ENCODE measurements at regions of chr1 and their contacts with region 1.

Region 1: GRCh38 chr1:48236716-48237470 is 14.4 kb downstream of the SLC5A9 start:
- DNase-seq: peak; percentile 42
- H3K4me3 ChIP-seq: no peak overlapping the region
- H3K27ac ChIP-seq: no peak overlapping the region
- H3K4me1 ChIP-seq: no peaks in the 10 kb centered on the region
- CTCF ChIP-seq: peak; percentile 78

Region 2: DNA sequence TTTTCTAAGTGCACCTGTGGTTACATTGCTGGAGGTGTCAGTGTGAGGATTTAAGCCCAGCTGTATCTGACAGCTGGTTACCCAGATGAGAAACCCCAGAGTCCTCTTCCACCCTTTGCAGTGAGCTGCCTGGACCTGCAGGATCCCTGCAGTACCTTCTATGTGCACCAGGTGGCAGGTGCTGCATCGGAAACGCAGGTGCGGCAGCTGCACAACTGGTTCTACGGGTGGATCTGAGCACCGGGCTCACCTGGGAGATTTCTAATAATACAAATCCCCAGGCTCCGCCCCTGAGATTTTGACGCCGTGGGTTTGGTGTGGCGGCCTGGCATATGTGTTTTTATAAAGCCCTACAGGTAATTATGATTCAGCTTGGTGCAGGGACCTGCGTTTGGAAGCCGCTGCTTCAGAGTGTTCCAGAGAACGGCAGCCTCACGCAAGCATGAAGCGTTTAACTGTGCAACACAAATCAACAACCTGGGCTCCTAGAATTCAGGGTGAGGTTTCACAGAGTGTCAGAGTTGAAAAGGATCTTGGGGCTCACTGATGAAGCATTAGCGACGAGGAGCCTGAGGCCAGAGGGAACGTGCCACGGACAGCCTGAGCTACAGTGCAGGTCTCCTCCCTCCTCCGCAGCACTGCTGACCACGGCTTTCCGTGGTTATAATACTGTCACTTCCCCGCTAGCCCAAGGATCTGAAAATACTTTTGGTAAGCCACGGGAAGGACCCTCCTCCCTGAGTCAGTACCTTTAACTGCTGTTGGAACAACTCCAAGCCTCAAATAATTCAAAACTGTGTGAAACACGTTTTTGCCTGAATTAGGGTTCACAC is 143.0 kb before region 1 on chr1:
- CTCF ChIA-PET with region 1: no interaction called
- POLR2A ChIA-PET with region 1: no interaction called
- intact Hi-C with region 1: loop called (anchors 5 kb)
- DNase-seq: peak; percentile 62
- H3K4me3 ChIP-seq: no peak overlapping the region
- H3K27ac ChIP-seq: no peak overlapping the region
- H3K4me1 ChIP-seq: no peaks in the 10 kb centered on the region
- CTCF ChIP-seq: peak; percentile 80

Region 3: DNA sequence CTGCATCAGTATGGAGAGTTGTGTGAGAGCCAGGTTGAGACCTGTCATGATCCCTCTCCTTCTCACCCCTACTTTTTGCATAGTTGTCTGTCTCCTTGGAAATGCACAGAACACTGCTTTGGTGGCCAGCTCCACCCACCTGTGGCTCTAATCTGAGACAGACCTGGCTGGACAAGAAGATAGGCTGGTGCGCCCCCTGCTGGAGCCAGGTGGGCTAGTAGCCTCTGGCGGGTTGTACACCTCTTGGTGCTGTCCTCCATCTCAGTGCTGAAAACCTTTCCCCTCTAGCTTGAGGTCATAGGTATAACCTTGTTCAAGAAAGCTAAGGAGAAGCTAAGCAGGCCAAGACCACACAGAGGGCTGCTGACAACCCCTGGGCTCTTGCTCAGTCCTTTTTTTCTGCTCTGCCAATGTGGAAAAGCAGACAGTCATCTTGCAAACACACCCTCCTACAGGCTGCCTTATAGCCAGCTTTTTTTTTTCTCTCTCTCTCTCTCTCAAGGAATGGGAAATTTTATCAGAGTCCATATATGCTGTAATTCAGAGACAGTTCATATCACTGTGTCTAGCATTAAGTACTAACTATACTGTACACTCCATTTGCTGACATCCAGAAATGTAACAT is 293.9 kb after region 1 on chr1:
- CTCF ChIA-PET with region 1: no interaction called
- POLR2A ChIA-PET with region 1: no interaction called
- intact Hi-C with region 1: no loop called
- DNase-seq: peak; percentile 64
- H3K4me3 ChIP-seq: no peak overlapping the region
- H3K27ac ChIP-seq: no peak overlapping the region
- H3K4me1 ChIP-seq: no peaks in the 10 kb centered on the region
- CTCF ChIP-seq: peak; percentile 87